H1 (cell line): ENCODE measurements at regions of chr12 and their contacts with region 1.

Region 1: DNA sequence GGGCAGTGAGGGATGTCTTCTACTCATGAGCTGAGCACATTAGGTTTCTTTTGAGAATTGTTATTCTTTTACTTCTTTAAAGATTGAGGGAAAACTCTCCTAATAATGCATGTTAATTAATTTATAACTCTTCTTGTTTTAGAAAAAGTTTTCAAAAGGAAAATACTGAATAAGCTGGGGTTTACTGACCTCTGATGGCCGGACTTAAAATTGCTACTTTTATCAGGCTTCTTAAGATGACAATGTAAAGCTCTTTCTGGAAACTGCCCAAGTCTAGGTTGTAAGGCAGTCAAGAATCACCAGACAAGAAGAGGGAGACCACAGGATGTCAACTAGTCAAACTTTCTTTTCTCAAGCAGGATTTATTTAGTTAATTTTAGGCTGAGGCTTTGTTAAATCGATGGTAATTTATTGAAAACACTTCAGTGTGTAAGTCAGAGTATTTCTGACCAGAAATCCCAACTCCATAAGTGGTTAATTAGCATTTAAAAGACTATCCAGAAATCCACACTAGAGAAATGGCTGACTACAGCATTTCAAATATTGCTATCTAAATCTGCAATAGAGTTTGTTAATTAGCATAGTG is 82.1 kb downstream of the AVPR1A start:
- DNase-seq: no peak
- H3K4me3 ChIP-seq: no peak overlapping the region
- H3K27ac ChIP-seq: no peak overlapping the region
- H3K4me1 ChIP-seq: no peaks in the 10 kb centered on the region
- H3K27me3 ChIP-seq: no peaks in the 10 kb centered on the region
- CTCF ChIP-seq: peak in 2 of 3 experiments; percentile 45 to 52; a peak in 2 of 4 replicates
- EP300 ChIP-seq: no peak
- POLR2A ChIP-seq: no peak
- RAD21 ChIP-seq: peak; percentile 74 to 80

Region 2: GRCh38 chr12:62793256-62794217 is 275.4 kb before region 1 on chr12:
- CTCF ChIA-PET with region 1: interaction called, 65 read pairs
- POLR2A ChIA-PET with region 1: no interaction called
- DNase-seq: peak; percentile 61 to 93
- H3K4me3 ChIP-seq: no peak overlapping the region
- H3K27ac ChIP-seq: no peak overlapping the region; the same call in 1 of the 2 replicates
- H3K4me1 ChIP-seq: peaks cover 0 to 7% (median 0%) of the 10 kb centered on the region in 4 experiments; a peak in 2 of 7 replicates
- H3K27me3 ChIP-seq: no peaks in the 10 kb centered on the region
- CTCF ChIP-seq: peak; percentile 71 to 87 (median 81)
- EP300 ChIP-seq: no peak
- POLR2A ChIP-seq: no peak
- RAD21 ChIP-seq: peak; percentile 98

Region 3: DNA sequence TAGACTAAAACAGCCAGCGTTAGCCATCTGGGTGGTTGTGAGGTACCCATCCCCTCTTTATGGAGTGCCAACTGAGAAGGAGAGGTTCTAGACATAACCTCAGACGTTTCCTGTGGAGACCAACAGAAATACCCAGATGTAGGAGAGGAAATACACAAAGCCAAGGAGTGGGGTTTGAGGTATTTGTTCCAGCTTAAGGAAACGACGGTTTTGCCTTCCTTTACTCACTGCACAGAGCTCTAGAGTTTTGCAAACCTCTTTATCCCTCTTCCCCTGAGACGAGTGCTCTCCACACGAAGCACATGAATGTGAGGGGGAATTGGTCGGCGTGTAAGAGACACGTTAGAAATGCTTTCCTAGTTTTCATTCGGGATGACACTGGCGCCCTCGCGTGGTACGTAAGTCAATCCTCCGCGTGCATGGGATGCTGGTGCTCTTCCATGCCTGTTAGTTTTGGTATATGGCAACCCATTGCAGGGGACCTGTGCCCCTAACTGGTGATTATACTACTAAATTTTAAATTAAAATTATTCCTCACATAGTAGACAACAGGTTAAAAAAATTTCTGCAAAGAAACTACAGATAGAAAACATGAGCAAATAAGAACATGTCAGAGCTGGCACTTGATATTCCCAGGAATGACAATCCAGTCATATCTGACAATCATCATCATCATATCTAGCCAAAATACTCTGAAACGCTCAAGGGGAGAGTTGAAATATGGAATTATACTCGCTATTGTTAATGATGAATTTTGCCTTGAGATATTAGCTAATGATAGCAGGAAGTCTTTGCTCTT is 255.7 kb before region 1 on chr12:
- CTCF ChIA-PET with region 1: interaction called, 35 read pairs
- POLR2A ChIA-PET with region 1: no interaction called
- DNase-seq: peak; percentile 31 to 57
- H3K4me3 ChIP-seq: no peak overlapping the region
- H3K27ac ChIP-seq: no peak overlapping the region
- H3K4me1 ChIP-seq: peaks cover 0 to 6% (median 2%) of the 10 kb centered on the region in 4 experiments; a peak in 3 of 7 replicates
- H3K27me3 ChIP-seq: no peaks in the 10 kb centered on the region
- CTCF ChIP-seq: peak; percentile 80 to 91 (median 88)
- EP300 ChIP-seq: no peak
- POLR2A ChIP-seq: no peak
- RAD21 ChIP-seq: peak; percentile 82 to 85

Region 4: DNA sequence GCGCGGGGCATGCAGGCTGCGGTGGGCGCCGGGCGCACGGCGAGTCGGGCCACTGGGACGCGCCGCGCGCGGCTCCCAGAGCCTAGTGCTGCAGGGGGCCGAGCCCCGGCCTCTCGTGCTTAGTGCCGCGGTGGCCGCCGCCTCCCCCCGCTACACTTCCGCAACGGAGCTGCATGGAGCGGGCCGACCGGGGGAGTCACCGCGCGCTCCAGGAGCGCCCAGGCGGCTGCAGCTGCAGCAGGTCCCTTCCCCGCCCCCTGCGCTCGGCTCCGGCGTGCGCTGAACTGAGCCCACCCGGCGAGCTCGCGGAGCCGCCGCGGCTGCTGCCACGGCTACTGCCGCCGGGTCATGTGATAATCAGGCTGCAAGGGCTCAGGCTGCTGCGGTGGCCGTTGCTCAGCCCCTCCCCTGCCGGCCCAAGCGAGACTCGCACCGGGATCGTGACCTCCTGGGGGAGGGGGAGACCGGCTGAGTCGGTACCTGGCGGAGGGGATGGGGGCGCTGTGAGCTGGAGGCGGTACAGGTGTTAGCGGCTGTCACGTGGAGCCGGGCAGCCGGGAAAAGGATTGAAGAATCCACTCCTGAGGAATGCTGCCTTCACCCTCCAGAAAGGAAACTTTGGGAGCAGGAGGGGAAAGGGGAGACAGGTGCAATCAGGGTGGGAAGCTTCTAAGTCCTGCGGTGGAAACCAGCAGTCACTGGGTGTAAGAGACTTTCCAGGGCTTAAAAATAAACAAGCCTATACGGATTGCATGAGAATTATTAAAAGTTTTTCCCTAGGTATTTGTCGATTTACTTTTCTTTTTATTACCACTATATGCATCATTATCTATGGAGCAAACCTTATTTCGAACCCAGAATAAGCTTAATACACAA is 133.9 kb before region 1 on chr12 and contains the start of gene PPM1H:
- CTCF ChIA-PET with region 1: interaction called, 29 read pairs
- POLR2A ChIA-PET with region 1: no interaction called
- DNase-seq: peak; percentile 82 to 94
- H3K4me3 ChIP-seq: peak within 1 kb of the TSS; percentile 68 to 88 (median 83)
- H3K27ac ChIP-seq: no peak within 1 kb of the TSS
- H3K4me1 ChIP-seq: peaks cover 0 to 13% (median 2%) of the 10 kb centered on the region in 4 experiments; a peak in 5 of 7 replicates
- H3K27me3 ChIP-seq: no peaks in the 10 kb centered on the region; a peak in 1 of 7 replicates
- CTCF ChIP-seq: peak; percentile 84 to 90 (median 89)
- EP300 ChIP-seq: peak in 1 of 2 experiments; percentile 84; a peak in 1 of 3 replicates
- POLR2A ChIP-seq: peak in 1 of 2 experiments; percentile 60; a peak in 2 of 3 replicates
- RAD21 ChIP-seq: peak; percentile 69 to 73
- total RNA-seq, gene PPM1H: 35.6 and 36.1 TPM in 2 replicates

Region 5: GRCh38 chr12:62955678-62956077 is 113.3 kb before region 1 on chr12:
- CTCF ChIA-PET with region 1: no interaction called
- POLR2A ChIA-PET with region 1: no interaction called
- DNase-seq: no peak
- H3K4me3 ChIP-seq: no peak overlapping the region
- H3K27ac ChIP-seq: no peak overlapping the region
- H3K4me1 ChIP-seq: peaks cover 0 to 4% (median 0%) of the 10 kb centered on the region in 4 experiments; a peak in 1 of 7 replicates
- H3K27me3 ChIP-seq: peaks cover 0 to 5% (median 0%) of the 10 kb centered on the region in 4 experiments; a peak in 1 of 7 replicates
- CTCF ChIP-seq: no peak
- EP300 ChIP-seq: no peak
- POLR2A ChIP-seq: no peak
- RAD21 ChIP-seq: no peak

Region 6: DNA sequence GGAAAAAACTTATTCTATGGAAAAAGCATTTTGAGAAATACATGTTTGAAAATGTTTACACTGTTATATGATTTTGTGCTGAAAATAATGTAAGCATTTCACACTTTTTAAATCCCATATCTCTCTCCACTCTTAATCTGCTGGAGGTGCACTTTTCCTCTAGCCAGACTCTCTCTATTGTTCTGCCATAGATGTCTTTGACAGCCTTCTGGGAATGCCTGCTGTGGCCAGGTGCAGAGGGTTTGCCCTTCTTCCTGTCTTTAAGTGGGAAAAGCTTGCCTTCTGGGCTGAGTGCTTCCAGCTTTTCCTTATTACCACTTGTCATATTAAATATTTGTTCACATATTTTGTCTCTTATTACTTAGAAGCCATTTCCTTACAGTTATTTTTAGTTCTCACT is 73.9 kb before region 1 on chr12:
- CTCF ChIA-PET with region 1: interaction called, 32 read pairs
- POLR2A ChIA-PET with region 1: no interaction called
- DNase-seq: peak in 1 of 2 experiments; percentile 15
- H3K4me3 ChIP-seq: no peak overlapping the region
- H3K27ac ChIP-seq: no peak overlapping the region
- H3K4me1 ChIP-seq: peaks cover 0 to 5% (median 0%) of the 10 kb centered on the region in 4 experiments; a peak in 1 of 7 replicates
- H3K27me3 ChIP-seq: no peaks in the 10 kb centered on the region; a peak in 1 of 7 replicates
- CTCF ChIP-seq: peak in 2 of 3 experiments; percentile 14 to 37; a peak in 1 of 4 replicates
- EP300 ChIP-seq: no peak
- POLR2A ChIP-seq: no peak
- RAD21 ChIP-seq: peak; percentile 36 to 55; a peak in 3 of 4 replicates

Region 7: GRCh38 chr12:63079791-63080502 is 11.0 kb after region 1 on chr12:
- CTCF ChIA-PET with region 1: interaction called, 16 read pairs
- POLR2A ChIA-PET with region 1: no interaction called
- DNase-seq: no peak
- H3K4me3 ChIP-seq: no peak overlapping the region
- H3K27ac ChIP-seq: no peak overlapping the region
- H3K4me1 ChIP-seq: peaks cover 3 to 6% (median 3%) of the 10 kb centered on the region in 4 experiments; a peak in 6 of 7 replicates
- H3K27me3 ChIP-seq: no peaks in the 10 kb centered on the region
- CTCF ChIP-seq: no peak
- EP300 ChIP-seq: no peak
- POLR2A ChIP-seq: no peak
- RAD21 ChIP-seq: no peak

Region 8: DNA sequence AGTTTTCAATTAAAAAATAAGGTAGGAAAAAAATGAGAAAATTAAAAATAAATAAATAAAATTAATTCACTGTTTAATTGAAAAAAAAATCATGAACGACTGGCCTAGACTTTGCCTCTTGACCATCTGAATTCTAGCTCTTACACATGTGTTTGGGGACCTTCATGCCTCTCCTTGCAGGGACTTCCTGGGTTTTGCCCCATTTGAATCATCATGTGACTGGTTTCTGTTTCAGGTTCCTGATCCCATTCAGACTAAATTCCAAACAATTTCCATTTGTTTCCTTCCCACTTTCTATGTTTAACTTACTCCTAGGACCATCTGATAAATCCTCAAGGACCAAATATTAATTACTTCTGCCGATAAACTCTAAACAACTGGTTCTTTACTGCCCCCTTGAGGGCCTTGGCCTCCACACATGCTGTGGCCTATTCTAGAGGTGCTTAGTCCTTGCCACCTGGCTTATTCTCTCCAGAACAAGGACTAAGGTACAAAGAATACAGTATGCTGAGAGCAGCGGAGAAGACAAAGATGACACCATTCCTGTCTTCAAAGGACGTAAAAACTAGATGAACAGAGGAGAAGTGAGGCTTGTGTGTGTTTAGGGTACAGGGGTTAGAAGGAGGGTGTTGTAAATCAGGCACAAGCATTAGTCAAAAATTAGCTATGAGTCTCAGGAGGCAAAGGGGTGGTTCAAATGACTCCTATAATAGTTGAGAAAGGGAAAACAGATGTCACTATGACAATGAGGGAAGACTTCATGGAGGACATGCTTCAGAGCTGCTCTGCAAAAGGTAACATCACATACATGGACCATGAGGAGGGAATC is 207.8 kb after region 1 on chr12:
- CTCF ChIA-PET with region 1: no interaction called
- POLR2A ChIA-PET with region 1: no interaction called
- DNase-seq: peak; percentile 38 to 69
- H3K4me3 ChIP-seq: no peak overlapping the region
- H3K27ac ChIP-seq: no peak overlapping the region
- H3K4me1 ChIP-seq: no peaks in the 10 kb centered on the region
- H3K27me3 ChIP-seq: no peaks in the 10 kb centered on the region
- CTCF ChIP-seq: peak; percentile 46 to 82 (median 78)
- EP300 ChIP-seq: no peak
- POLR2A ChIP-seq: no peak
- RAD21 ChIP-seq: peak; percentile 80 to 83

Region 9: GRCh38 chr12:63387771-63388170 is 318.8 kb after region 1 on chr12:
- CTCF ChIA-PET with region 1: no interaction called
- POLR2A ChIA-PET with region 1: no interaction called
- DNase-seq: no peak
- H3K4me3 ChIP-seq: no peak overlapping the region
- H3K27ac ChIP-seq: no peak overlapping the region
- H3K4me1 ChIP-seq: peaks cover 0 to 4% (median under 1%) of the 10 kb centered on the region in 4 experiments; a peak in 1 of 7 replicates
- H3K27me3 ChIP-seq: no peaks in the 10 kb centered on the region
- CTCF ChIP-seq: no peak
- EP300 ChIP-seq: no peak
- POLR2A ChIP-seq: no peak
- RAD21 ChIP-seq: no peak

Region 10: GRCh38 chr12:63400318-63400717 is 331.4 kb after region 1 on chr12:
- CTCF ChIA-PET with region 1: no interaction called
- POLR2A ChIA-PET with region 1: no interaction called
- DNase-seq: no peak
- H3K4me3 ChIP-seq: no peak overlapping the region
- H3K27ac ChIP-seq: no peak overlapping the region
- H3K4me1 ChIP-seq: no peaks in the 10 kb centered on the region
- H3K27me3 ChIP-seq: no peaks in the 10 kb centered on the region
- CTCF ChIP-seq: no peak
- EP300 ChIP-seq: no peak
- POLR2A ChIP-seq: no peak
- RAD21 ChIP-seq: no peak